ENCODE measurements at regions of chr6 and their contacts with region 1.

Region 1: DNA sequence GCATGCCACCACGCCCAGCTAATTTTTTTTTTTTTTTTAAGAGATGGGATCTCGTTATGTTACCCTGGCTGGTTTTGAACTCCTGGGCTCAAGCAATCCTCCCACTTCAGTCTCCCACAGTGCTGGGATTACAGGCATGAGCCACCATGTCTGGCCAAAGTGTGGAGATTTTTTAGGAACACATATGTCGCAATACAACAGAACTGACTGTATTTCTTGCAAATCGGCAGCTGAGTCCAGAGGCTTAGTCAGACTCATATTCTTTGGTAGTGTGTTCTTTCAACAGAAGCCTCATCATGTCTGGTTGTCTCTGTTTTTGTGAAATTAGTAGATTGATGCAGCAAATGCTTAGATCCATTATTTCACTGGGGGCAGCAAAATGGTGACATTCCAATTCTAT is 23.9 kb upstream of the CD164 start:
- DNase-seq: no peak
- H3K4me3 ChIP-seq: no peak overlapping the region
- H3K27ac ChIP-seq: no peak overlapping the region
- H3K4me1 ChIP-seq: no peaks in the 10 kb centered on the region
- H3K27me3 ChIP-seq: no peaks in the 10 kb centered on the region
- CTCF ChIP-seq: no peak
- EP300 ChIP-seq: no peak
- POLR2A ChIP-seq: no peak

Region 2: DNA sequence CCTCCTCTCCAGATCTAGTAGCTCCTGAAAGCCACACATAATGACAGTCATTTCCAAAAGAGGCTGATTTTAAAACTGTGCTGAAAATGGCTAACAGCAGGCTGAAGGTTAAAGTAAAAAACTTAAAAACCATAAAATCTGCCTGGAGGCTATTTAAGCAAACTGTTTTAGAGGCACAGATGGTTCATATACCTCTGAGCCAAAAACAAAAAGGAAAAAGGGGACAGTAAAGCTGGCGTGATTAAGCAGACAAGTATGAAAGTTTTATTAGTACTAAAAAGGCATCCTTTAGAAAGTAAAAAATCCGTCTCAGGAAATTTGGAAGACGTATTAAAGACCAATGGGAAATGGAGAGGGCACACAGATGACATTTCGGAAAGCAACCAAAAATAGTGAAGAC is 1860.4 kb before region 1 on chr6:
- in situ Hi-C with region 1: no loop called
- intact Hi-C with region 1: loop called (anchors 5 kb)
- DNase-seq: no peak
- H3K4me3 ChIP-seq: no peak overlapping the region
- H3K27ac ChIP-seq: peak overlapping the region in 2 of 4 donors; percentile 9 to 28
- H3K4me1 ChIP-seq: no peaks in the 10 kb centered on the region
- H3K27me3 ChIP-seq: no peaks in the 10 kb centered on the region
- CTCF ChIP-seq: no peak
- EP300 ChIP-seq: no peak
- POLR2A ChIP-seq: no peak

Region 3: GRCh38 chr6:109372130-109372529 is 34.1 kb before region 1 on chr6:
- in situ Hi-C with region 1: no loop called
- intact Hi-C with region 1: no loop called
- DNase-seq: no peak
- H3K4me3 ChIP-seq: no peak overlapping the region
- H3K27ac ChIP-seq: no peak overlapping the region
- H3K4me1 ChIP-seq: peaks cover 0 to 38% (median 1%) of the 10 kb centered on the region in 4 donors
- H3K27me3 ChIP-seq: no peaks in the 10 kb centered on the region
- CTCF ChIP-seq: no peak
- EP300 ChIP-seq: no peak
- POLR2A ChIP-seq: no peak

Region 4: GRCh38 chr6:109382576-109383437 is 23.4 kb before region 1 on chr6:
- in situ Hi-C with region 1: no loop called
- intact Hi-C with region 1: no loop called
- DNase-seq: peak; percentile 94
- H3K4me3 ChIP-seq: peak overlapping the region; percentile 33 to 99 (median 64)
- H3K27ac ChIP-seq: peak overlapping the region; percentile 97 to 100 (median 99)
- H3K4me1 ChIP-seq: peaks cover 11 to 47% (median 30%) of the 10 kb centered on the region in 4 donors
- H3K27me3 ChIP-seq: no peaks in the 10 kb centered on the region
- CTCF ChIP-seq: peak; percentile 31 to 73 (median 49)
- EP300 ChIP-seq: no peak
- POLR2A ChIP-seq: peak; percentile 73

Region 5: DNA sequence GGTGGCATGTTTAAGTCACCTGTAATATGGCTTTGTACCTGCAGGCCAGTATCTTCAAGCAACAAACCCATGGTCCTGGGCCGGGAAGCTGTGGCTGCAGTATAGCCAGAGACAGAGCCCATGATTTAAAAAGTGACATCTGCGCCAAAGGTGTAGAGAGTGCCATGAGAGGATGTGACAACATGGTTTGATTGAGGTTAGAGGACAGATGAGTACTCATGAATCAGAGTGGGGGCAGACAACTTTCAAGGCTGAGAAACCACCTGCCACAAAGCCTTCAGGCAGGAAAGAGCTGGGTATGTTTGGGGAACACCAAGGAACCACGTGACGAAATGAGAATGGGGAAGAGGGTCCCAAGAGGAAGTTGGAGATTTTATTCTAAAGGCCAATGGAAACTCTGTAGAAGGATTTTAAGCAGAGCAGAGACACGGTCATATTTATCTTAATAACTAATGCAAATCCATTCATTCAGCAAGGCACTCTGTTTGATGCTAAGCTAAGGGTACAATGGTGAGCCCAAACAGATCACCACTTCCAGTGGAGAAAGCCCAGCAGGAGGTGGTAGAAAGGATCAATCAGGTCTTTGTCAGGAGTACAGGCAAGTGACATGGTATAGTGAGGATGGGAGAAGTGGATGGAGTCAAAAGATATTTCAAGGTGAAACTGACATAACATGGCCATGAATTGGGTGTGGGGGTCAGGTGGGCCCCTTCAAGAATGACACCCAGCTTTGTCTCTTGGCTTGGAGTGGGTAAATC is 52.8 kb after region 1 on chr6:
- in situ Hi-C with region 1: no loop called
- intact Hi-C with region 1: no loop called
- DNase-seq: no peak
- H3K4me3 ChIP-seq: no peak overlapping the region
- H3K27ac ChIP-seq: peak overlapping the region in 3 of 4 donors; percentile 21 to 93 (median 34)
- H3K4me1 ChIP-seq: peaks cover 10 to 35% (median 29%) of the 10 kb centered on the region in 4 donors
- H3K27me3 ChIP-seq: no peaks in the 10 kb centered on the region
- CTCF ChIP-seq: no peak
- EP300 ChIP-seq: no peak
- POLR2A ChIP-seq: no peak